ENCODE measurements at regions of chr6 and their contacts with region 1.

Region 1: GRCh38 chr6:159789377-159790148 is at the start of gene TCP1:
- DNase-seq: peak; percentile 94
- ATAC-seq: peak; percentile 80
- H3K4me3 Mint-ChIP-seq: peak within 1 kb of the TSS; percentile 88
- H3K27ac Mint-ChIP-seq: peak within 1 kb of the TSS; percentile 91
- H3K4me1 Mint-ChIP-seq: peaks cover 47% of the 10 kb centered on the region
- H3K27me3 Mint-ChIP-seq: no peaks in the 10 kb centered on the region
- total RNA-seq, gene TCP1: 181 to 197 TPM

Region 2: DNA sequence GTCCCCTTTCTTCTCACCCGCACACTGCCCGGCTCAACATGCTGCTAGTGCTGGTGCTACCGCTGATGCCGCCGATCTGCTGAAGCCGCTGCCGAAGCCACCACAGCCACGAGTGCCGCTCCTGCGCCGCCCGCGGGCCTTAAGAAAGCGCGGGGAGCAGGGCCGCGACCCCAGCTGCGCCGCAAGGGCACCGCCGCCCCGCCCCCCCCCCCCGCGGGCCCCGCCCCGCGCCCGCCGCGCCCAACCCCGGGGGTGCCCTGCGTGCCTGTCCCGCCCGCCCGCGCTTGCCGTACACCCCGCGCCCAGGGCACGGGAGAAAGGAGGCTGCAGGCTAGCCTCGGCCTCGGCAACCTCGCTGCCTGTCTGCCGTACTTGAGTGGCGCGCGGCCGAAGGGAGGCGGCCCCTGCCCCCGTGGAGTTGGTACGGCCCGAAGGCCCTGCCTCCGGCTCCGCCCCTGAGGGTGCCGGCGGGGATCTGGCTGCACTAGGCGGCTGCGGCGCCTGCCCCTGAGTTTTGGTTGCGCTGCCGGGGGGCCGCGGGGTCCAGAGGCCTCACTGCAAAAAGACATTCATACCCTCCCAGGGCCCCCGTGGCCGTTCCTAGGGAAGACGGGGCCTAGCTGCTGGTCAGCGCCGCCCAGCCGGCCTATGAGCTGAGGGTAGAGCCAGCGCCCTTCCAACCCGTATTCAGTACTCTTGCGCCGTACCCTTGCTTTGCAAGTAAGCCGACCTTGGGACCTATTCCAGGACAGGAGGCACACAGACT is 96.3 kb before region 1 on chr6 and contains the start of gene SOD2:
- POLR2A ChIA-PET with region 1: interaction called, 27 read pairs
- DNase-seq: peak; percentile 90
- ATAC-seq: peak; percentile 77
- H3K4me3 Mint-ChIP-seq: peak within 1 kb of the TSS; percentile 94
- H3K27ac Mint-ChIP-seq: peak within 1 kb of the TSS; percentile 93
- H3K4me1 Mint-ChIP-seq: peaks cover 36% of the 10 kb centered on the region
- H3K27me3 Mint-ChIP-seq: no peaks in the 10 kb centered on the region
- total RNA-seq, gene SOD2: 68.4 to 72.1 TPM

Region 3: DNA sequence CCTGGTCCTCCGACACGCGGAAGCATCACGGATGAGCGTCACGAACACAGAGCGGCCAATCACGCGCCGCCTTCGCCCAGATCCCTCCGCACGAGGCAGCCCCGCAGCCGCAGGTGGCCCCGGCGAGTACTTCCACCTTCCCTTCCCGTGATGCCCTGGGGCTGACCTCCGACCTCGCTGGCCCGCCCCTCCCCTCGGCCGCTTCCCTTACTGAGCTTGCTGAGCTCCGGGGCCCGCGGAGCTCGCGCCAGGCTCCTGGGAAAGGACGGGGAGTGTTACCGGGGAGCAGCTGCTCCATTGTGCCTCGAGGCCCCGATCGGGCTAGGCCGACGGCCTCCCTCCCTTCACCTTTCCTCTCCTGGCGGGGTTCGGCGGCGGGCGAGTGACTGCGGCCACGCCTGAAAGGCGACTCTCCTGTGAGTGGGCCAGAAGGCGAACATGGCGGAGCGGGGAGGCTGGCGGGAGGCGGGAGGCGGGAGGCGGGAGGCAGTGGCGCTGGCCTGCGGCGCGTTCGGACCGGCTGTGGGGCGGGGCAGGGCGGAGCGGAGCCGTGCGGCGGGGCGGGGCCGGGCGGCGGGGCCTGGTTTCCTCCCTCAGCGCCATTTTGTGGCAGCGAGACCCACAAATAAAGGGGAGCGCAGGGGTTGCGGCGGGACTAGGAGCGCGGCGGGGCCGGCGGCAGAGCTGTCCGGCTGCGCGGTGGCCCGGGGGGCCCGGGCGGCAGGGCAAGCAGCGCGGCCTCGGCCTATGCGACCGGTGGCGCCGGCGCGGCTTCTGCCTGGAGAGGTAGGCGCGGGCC is 62.4 kb before region 1 on chr6 and contains the start of gene WTAP:
- POLR2A ChIA-PET with region 1: interaction called, 89 read pairs
- DNase-seq: peak; percentile 95
- ATAC-seq: peak; percentile 78
- H3K4me3 Mint-ChIP-seq: peak within 1 kb of the TSS; percentile 94
- H3K27ac Mint-ChIP-seq: peak within 1 kb of the TSS; percentile 98
- H3K4me1 Mint-ChIP-seq: peaks cover 32% of the 10 kb centered on the region
- H3K27me3 Mint-ChIP-seq: no peaks in the 10 kb centered on the region
- total RNA-seq, gene WTAP: 127 to 129 TPM

Region 4: DNA sequence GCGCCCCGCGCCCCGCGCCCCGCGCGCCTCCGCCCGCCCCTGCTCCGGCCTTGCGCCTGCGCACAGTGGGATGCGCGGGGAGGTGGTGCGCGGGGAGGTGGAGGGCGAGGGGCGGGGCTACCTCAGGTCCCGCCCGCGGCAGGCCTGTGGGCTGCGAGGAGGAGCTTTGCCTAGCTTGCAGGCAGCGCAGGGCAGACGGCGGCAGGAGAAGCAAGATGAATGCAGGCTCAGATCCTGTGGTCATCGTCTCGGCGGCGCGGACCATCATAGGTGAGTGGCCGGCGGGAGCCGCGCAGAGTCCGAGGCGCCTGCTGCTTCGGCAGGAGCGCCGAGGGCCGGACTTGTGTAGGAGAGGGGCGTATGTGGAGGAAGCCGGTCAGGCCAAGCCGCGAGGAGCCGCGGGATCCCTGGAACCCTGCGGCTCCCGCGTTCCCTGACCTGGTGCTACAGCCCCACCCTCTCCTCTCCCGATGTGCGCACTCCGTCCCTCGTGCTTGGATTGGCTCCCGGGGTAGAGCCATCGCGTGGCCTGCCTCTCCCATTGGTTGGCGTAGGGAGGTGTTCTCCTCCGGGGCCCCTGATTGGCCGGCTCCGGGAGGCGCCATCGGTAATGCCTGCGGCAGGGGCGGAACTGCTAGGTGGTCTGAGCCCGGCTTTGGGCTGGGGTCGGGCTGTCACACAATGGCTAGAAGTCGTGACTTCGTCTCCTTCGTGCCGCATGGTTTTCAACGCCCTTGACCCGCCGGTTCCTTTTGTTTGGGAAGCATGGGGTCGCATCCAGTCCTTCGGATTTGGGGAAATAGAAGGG is 27.5 kb before region 1 on chr6 and contains the start of gene ACAT2:
- POLR2A ChIA-PET with region 1: interaction called, 44 read pairs
- DNase-seq: peak; percentile 94
- ATAC-seq: peak; percentile 97
- H3K4me3 Mint-ChIP-seq: peak within 1 kb of the TSS; percentile 99
- H3K27ac Mint-ChIP-seq: peak within 1 kb of the TSS; percentile 95
- H3K4me1 Mint-ChIP-seq: peaks cover 27% of the 10 kb centered on the region
- H3K27me3 Mint-ChIP-seq: no peaks in the 10 kb centered on the region
- total RNA-seq, gene ACAT2: 55.3 to 57.1 TPM

Region 5: DNA sequence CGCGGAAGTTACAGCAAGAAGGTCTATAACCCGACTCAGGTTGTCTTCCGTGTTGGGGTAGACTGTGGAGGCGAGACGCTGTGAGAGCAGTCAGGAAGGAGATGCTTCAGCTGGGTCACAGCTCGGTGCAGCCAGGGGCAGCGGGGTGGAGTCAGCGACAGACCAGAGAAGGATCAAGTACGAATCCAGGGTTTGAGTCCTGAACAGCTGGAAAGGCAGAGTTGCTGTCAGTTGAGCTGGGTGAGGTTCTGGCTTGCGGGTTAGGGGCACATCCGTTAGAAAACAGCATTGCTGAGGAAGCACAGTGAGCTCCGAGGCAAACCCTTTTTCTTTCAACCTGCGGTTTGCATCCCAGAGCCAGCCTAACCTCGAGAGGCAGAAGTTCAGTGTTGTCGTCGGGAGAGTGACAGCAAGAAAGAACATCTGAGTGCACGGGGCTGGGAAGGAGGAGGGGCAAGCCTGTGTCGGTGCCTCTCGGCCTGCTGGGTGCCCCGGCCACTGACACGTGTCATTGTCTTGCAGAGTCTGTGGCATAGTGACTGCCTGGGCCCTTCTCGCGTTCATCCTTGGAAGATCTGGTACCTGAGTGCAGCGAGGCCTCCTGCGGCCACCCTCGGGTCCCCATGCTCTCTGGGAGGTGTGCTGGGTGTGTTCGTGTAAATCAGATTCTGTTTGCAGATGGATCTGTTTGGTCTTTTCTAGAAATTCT is 30.5 kb after region 1 on chr6:
- POLR2A ChIA-PET with region 1: interaction called, 12 read pairs
- DNase-seq: peak; percentile 54
- ATAC-seq: peak; percentile 86
- H3K4me3 Mint-ChIP-seq: peak overlapping the region; percentile 74
- H3K27ac Mint-ChIP-seq: peak overlapping the region; percentile 87
- H3K4me1 Mint-ChIP-seq: peaks cover 15% of the 10 kb centered on the region
- H3K27me3 Mint-ChIP-seq: no peaks in the 10 kb centered on the region

Region 6: DNA sequence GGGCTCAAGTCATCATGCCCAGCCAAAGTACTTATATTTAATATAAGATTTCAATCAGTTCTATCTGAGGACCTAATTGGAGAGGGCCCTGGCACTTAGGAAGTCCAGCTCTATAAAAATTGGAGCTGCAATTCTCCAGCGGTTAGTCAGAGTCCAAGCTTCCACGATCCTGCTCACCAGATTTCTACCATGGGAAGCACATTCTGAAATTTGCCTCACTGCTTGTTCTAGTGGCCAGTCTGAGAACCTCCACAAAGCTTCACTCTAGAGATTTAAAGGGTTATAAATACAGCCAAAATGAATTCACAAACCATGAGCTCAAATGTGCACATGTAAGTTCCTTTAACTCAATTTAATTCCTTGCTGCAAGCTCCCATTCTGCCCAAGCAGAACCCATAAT is 44.0 kb after region 1 on chr6:
- POLR2A ChIA-PET with region 1: interaction called, 11 read pairs
- DNase-seq: no peak
- ATAC-seq: no peak
- H3K4me3 Mint-ChIP-seq: no peak overlapping the region
- H3K27ac Mint-ChIP-seq: peak overlapping the region; percentile 50
- H3K4me1 Mint-ChIP-seq: peaks cover 22% of the 10 kb centered on the region
- H3K27me3 Mint-ChIP-seq: peaks cover 6% of the 10 kb centered on the region

Measured in activated naive CD8-positive, alpha-beta T cell treated with anti-CD3 and anti-CD28 coated beads, Interleukin-2, amount 10 ng/mL, durations not matched to agents 7 days and 5 days (primary cell).